HepG2 (cell line): ENCODE measurements at regions of chr6 and their contacts with region 1.

Region 1: GRCh38 chr6:57048577-57048976 is 2.1 kb downstream of the KIAA1586 start:
- DNase-seq: no peak
- ATAC-seq: no peak
- H3K4me3 ChIP-seq: peak overlapping the region in 2 of 3 experiments; percentile 19 to 38; a peak in 3 of 6 replicates
- H3K27ac ChIP-seq: no peak overlapping the region
- H3K4me1 ChIP-seq: peaks cover 29% of the 10 kb centered on the region
- H3K27me3 ChIP-seq: no peaks in the 10 kb centered on the region
- CTCF ChIP-seq: no peak
- EP300 ChIP-seq: no peak
- POLR2A ChIP-seq: no peak
- RAD21 ChIP-seq: no peak

Region 2: DNA sequence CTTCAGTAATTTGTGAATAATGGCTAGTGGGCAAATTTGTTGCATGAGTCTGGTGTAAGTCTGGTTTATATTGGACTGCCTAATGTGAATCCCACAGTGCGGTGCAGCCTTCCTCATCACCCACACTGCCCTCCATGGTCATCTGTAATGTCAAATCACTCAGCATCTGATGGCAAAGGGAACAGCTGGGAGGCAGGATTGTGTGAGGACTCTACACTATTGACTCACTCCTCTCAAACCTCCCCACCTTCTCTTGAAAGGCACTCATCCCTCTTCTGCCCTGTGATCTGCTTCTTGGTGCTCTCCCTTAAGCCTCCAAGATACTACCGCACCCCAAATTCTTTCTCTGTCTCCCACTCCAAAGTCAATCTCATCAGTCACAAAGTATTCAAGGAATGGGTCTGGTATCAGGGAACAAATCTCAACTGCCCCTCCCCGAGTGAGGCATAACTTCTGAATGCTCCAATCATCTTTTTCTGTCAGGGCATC is 239.7 kb before region 1 on chr6:
- CTCF ChIA-PET with region 1: no interaction called
- POLR2A ChIA-PET with region 1: no interaction called
- in situ Hi-C with region 1: no loop called
- intact Hi-C with region 1: no loop called
- DNase-seq: no peak
- ATAC-seq: peak; percentile 36; the same call in 2 of the 3 replicates
- H3K4me3 ChIP-seq: no peak overlapping the region
- H3K27ac ChIP-seq: no peak overlapping the region
- H3K4me1 ChIP-seq: peaks cover under 1% of the 10 kb centered on the region; the same call in 1 of the 2 replicates
- H3K27me3 ChIP-seq: no peaks in the 10 kb centered on the region
- CTCF ChIP-seq: no peak
- EP300 ChIP-seq: no peak
- POLR2A ChIP-seq: no peak
- RAD21 ChIP-seq: no peak

Region 3: GRCh38 chr6:57089687-57090460 is 41.3 kb after region 1 on chr6 and contains the start of gene ZNF451:
- CTCF ChIA-PET with region 1: no interaction called
- POLR2A ChIA-PET with region 1: interaction called, 5 read pairs
- in situ Hi-C with region 1: no loop called
- intact Hi-C with region 1: loop called (anchors 2 kb)
- DNase-seq: peak; percentile 97
- ATAC-seq: peak; percentile 98
- H3K4me3 ChIP-seq: peak within 1 kb of the TSS; percentile 45 to 66 (median 62)
- H3K27ac ChIP-seq: peak within 1 kb of the TSS; percentile 65
- H3K4me1 ChIP-seq: peaks cover 67% of the 10 kb centered on the region
- H3K27me3 ChIP-seq: no peaks in the 10 kb centered on the region
- CTCF ChIP-seq: peak; percentile 41; the same call in 1 of the 2 replicates
- EP300 ChIP-seq: peak in 1 of 2 experiments; percentile 60; a peak in 2 of 4 replicates
- POLR2A ChIP-seq: peak; percentile 83 to 85
- RAD21 ChIP-seq: peak; percentile 62
- total RNA-seq, gene ZNF451: 65.7 and 104 TPM in 2 replicates

Region 4: GRCh38 chr6:57216235-57217101 is 167.9 kb after region 1 on chr6:
- CTCF ChIA-PET with region 1: no interaction called
- POLR2A ChIA-PET with region 1: no interaction called
- in situ Hi-C with region 1: no loop called
- intact Hi-C with region 1: loop called (anchors 5 kb)
- DNase-seq: no peak
- ATAC-seq: peak; percentile 48; the same call in 2 of the 3 replicates
- H3K4me3 ChIP-seq: no peak overlapping the region
- H3K27ac ChIP-seq: no peak overlapping the region
- H3K4me1 ChIP-seq: peaks cover 35% of the 10 kb centered on the region
- H3K27me3 ChIP-seq: no peaks in the 10 kb centered on the region; a peak in 1 of 5 replicates
- CTCF ChIP-seq: no peak
- EP300 ChIP-seq: no peak
- POLR2A ChIP-seq: no peak
- RAD21 ChIP-seq: no peak